ENCODE measurements at regions of chr6 and their contacts with region 1.

Region 1: DNA sequence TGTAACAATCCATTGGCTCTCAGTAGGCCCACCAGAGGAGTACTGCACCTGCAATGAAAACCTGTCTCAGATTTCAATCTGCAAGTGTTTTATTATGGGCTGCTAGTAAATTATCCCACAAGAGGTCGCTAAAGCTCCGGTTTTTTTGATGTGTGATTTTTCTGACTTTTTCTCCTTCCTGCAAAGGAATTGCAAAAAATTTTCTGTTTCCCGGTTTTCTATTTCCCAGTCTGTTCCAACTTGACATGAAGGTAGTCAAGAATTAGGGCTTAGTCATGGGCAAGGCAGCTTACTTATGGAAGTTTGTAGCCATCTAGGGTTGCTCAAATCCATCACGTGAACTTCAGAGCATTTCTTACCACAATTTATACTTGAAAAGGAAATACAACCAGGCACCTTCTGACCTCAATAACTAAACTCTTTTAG is 38.5 kb upstream of the AHI1 start:
- DNase-seq: peak; percentile 37
- H3K4me3 ChIP-seq: peak overlapping the region in 1 of 2 experiments; percentile 14; a peak in 1 of 4 replicates
- H3K27ac ChIP-seq: peak overlapping the region in 1 of 2 experiments; percentile 48; a peak in 2 of 4 replicates
- H3K4me1 ChIP-seq: peaks cover 0 to 5% of the 10 kb centered on the region in 2 experiments; a peak in 2 of 4 replicates
- H3K27me3 ChIP-seq: no peaks in the 10 kb centered on the region
- CTCF ChIP-seq: peak; percentile 74
- EP300 ChIP-seq: no peak
- RAD21 ChIP-seq: peak; percentile 84

Region 2: GRCh38 chr6:134295953-134296553 is 1239.9 kb before region 1 on chr6:
- CTCF ChIA-PET with region 1: no interaction called
- POLR2A ChIA-PET with region 1: no interaction called
- DNase-seq: no peak
- H3K4me3 ChIP-seq: no peak overlapping the region
- H3K27ac ChIP-seq: peak overlapping the region in 1 of 2 experiments; percentile 99; a peak in 3 of 4 replicates
- H3K4me1 ChIP-seq: peaks cover 6 to 12% of the 10 kb centered on the region in 2 experiments; a peak in 2 of 4 replicates
- H3K27me3 ChIP-seq: no peaks in the 10 kb centered on the region
- CTCF ChIP-seq: no peak
- EP300 ChIP-seq: peak; percentile 31 to 94; a peak in 3 of 4 replicates
- RAD21 ChIP-seq: no peak

Region 3: GRCh38 chr6:135434095-135434494 is 101.9 kb before region 1 on chr6:
- CTCF ChIA-PET with region 1: no interaction called
- POLR2A ChIA-PET with region 1: no interaction called
- DNase-seq: no peak
- H3K4me3 ChIP-seq: no peak overlapping the region
- H3K27ac ChIP-seq: no peak overlapping the region
- H3K4me1 ChIP-seq: no peaks in the 10 kb centered on the region
- H3K27me3 ChIP-seq: no peaks in the 10 kb centered on the region
- CTCF ChIP-seq: no peak
- EP300 ChIP-seq: no peak
- RAD21 ChIP-seq: no peak

Region 4: GRCh38 chr6:135451693-135452092 is 84.3 kb before region 1 on chr6:
- CTCF ChIA-PET with region 1: interaction called, 20 read pairs
- POLR2A ChIA-PET with region 1: no interaction called
- DNase-seq: peak; percentile 7
- H3K4me3 ChIP-seq: no peak overlapping the region; a peak in 1 of 4 replicates
- H3K27ac ChIP-seq: no peak overlapping the region
- H3K4me1 ChIP-seq: no peaks in the 10 kb centered on the region
- H3K27me3 ChIP-seq: no peaks in the 10 kb centered on the region
- CTCF ChIP-seq: peak; percentile 69
- EP300 ChIP-seq: no peak
- RAD21 ChIP-seq: peak; percentile 82

Region 5: DNA sequence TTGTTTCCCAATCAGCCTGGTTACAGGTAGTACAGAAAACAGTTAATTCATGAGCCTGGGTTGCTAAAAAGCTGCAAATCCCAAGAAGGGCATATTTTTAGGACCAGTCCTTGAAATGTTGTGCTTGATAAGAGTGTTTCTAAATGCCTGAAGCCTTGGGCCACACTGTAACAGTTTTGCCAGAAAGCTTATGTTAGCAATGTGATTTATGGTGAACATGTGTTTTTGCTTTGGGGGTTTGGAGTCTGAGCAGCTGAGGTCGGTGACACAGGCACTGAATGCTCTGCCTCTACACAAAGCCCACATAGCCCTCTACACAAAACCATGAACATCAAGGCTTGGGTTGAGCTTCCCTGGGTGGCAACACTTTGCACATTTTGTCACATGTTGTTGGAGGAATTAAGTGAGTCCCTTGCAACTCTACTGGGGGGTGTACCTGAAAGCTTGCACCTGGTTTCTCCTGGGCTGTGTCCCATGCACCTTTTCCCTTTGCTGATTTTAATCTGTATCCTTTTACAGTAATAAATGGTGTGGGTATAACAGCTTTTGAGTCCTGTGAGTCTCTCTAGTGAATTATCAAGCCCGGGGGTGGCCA is 60.6 kb before region 1 on chr6:
- CTCF ChIA-PET with region 1: no interaction called
- POLR2A ChIA-PET with region 1: no interaction called
- DNase-seq: peak; percentile 62
- H3K4me3 ChIP-seq: no peak overlapping the region
- H3K27ac ChIP-seq: peak overlapping the region in 1 of 2 experiments; percentile 86; a peak in 2 of 4 replicates
- H3K4me1 ChIP-seq: peaks cover 0 to 8% of the 10 kb centered on the region in 2 experiments; a peak in 2 of 4 replicates
- H3K27me3 ChIP-seq: no peaks in the 10 kb centered on the region
- CTCF ChIP-seq: no peak
- EP300 ChIP-seq: peak in 1 of 2 experiments; percentile 73; a peak in 1 of 4 replicates
- RAD21 ChIP-seq: no peak

Region 6: GRCh38 chr6:135627092-135627715 is 91.2 kb after region 1 on chr6:
- CTCF ChIA-PET with region 1: no interaction called
- POLR2A ChIA-PET with region 1: no interaction called
- DNase-seq: no peak
- H3K4me3 ChIP-seq: no peak overlapping the region
- H3K27ac ChIP-seq: no peak overlapping the region
- H3K4me1 ChIP-seq: no peaks in the 10 kb centered on the region
- H3K27me3 ChIP-seq: no peaks in the 10 kb centered on the region
- CTCF ChIP-seq: no peak
- EP300 ChIP-seq: no peak
- RAD21 ChIP-seq: no peak

Region 7: DNA sequence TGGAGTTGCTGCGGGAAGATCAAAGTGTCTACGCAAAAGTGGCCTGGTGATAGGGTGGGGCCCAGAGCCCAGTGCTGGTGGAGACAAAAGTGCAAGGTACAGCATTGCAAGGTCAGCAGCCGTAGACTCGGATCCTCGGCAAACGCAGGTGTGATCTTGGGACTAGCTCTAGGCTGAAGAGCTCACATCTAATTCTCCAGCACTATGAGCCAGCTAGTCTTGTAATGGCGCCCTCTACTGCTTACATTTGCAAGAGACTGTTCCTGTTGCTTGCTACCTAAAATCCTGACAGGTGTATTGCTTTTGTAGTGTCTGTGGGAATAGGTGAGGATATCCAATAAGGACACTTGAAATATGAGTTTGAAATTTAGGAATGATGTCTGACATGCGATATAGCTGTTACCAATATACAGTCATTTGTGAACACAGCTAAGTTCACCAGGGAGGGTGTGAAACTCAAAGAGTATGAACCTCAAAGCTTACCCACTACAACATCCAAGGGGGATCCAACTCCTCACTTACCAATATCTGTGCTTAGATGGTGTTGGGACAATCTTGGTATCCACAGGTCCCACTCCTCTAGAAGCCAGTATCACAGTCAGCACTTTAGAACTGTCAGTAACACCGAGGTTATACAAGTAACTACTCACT is 373.9 kb after region 1 on chr6:
- CTCF ChIA-PET with region 1: interaction called, 12 read pairs
- POLR2A ChIA-PET with region 1: no interaction called
- DNase-seq: peak; percentile 41
- H3K4me3 ChIP-seq: no peak overlapping the region; a peak in 1 of 4 replicates
- H3K27ac ChIP-seq: no peak overlapping the region
- H3K4me1 ChIP-seq: peaks cover 0 to 6% of the 10 kb centered on the region in 2 experiments; a peak in 1 of 4 replicates
- H3K27me3 ChIP-seq: no peaks in the 10 kb centered on the region
- CTCF ChIP-seq: peak; percentile 55
- EP300 ChIP-seq: no peak
- RAD21 ChIP-seq: peak; percentile 65